ENCODE measurements at regions of chr16 and their contacts with region 1.

Region 1: GRCh38 chr16:46853713-46854443 is 22.9 kb upstream of the C16orf87 start:
- DNase-seq: peak; percentile 71
- H3K4me3 ChIP-seq: no peak overlapping the region
- H3K27ac ChIP-seq: no peak overlapping the region
- H3K4me1 ChIP-seq: peaks cover 5% of the 10 kb centered on the region
- H3K27me3 ChIP-seq: no peaks in the 10 kb centered on the region
- CTCF ChIP-seq: peak; percentile 90

Region 2: DNA sequence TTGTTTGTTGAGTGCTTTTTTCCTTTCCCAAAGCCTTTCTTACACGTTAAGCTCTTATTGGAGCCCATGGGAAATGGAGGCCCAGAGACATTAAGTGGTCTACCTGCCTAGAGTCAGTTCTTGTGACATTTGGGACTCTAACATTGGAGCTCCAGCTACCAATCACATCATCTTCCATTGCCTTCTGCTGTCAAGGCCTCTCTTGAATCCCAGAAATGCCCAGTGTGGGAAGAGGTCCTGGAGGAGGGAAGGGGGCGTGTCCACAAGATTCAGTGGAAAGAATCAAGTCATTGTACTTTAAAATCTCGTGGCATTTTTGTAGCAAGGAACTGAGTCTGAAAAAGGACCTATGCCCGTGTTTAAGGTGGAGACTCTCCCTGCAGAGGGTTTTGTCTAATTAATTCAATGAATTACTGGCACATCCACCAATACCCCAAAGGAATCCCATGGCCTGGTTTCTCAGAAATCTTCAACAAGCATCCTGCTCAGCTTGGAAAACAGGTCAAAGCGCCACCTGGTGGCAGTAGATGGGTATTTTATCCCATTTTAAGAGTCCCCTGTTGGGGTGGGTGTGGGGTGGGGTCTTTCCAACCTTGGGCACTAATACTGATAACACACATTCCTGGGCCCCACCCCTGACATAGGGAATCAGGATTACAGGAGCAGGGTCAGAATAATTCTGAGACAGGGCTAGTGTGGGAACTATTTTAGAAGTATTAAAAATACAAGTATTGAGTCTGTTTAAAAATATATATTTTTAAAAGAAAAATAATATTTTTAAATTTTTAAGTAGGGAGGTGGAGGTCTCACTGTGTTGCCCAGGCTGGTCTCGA is 54.9 kb after region 1 on chr16:
- intact Hi-C with region 1: loop called (anchors 10 kb)
- DNase-seq: no peak
- H3K4me3 ChIP-seq: no peak overlapping the region
- H3K27ac ChIP-seq: no peak overlapping the region
- H3K4me1 ChIP-seq: peaks cover 10% of the 10 kb centered on the region
- H3K27me3 ChIP-seq: no peaks in the 10 kb centered on the region
- CTCF ChIP-seq: peak; percentile 80

Region 3: GRCh38 chr16:46986896-46987295 is 133.0 kb after region 1 on chr16:
- intact Hi-C with region 1: no loop called
- DNase-seq: no peak
- H3K4me3 ChIP-seq: no peak overlapping the region
- H3K27ac ChIP-seq: no peak overlapping the region
- H3K4me1 ChIP-seq: no peaks in the 10 kb centered on the region
- H3K27me3 ChIP-seq: no peaks in the 10 kb centered on the region
- CTCF ChIP-seq: no peak